ENCODE measurements at regions of chr1 and their contacts with region 1.

Region 1: GRCh38 chr1:223683586-223684487 is 18.3 kb upstream of the CAPN8 start:
- DNase-seq: peak; percentile 55
- H3K4me3 ChIP-seq: no peak overlapping the region
- H3K27ac ChIP-seq: no peak overlapping the region
- H3K4me1 ChIP-seq: no peaks in the 10 kb centered on the region
- H3K27me3 ChIP-seq: peaks cover 9 to 24% of the 10 kb centered on the region in 2 experiments
- CTCF ChIP-seq: peak; percentile 54 to 68
- POLR2A ChIP-seq: no peak

Region 2: GRCh38 chr1:223455470-223455869 is 228.4 kb before region 1 on chr1:
- CTCF ChIA-PET with region 1: no interaction called
- POLR2A ChIA-PET with region 1: no interaction called
- dilution Hi-C with region 1: no loop called
- intact Hi-C with region 1: no loop called
- DNase-seq: no peak
- H3K4me3 ChIP-seq: no peak overlapping the region
- H3K27ac ChIP-seq: no peak overlapping the region
- H3K4me1 ChIP-seq: no peaks in the 10 kb centered on the region
- H3K27me3 ChIP-seq: no peaks in the 10 kb centered on the region
- CTCF ChIP-seq: no peak
- POLR2A ChIP-seq: no peak

Region 3: DNA sequence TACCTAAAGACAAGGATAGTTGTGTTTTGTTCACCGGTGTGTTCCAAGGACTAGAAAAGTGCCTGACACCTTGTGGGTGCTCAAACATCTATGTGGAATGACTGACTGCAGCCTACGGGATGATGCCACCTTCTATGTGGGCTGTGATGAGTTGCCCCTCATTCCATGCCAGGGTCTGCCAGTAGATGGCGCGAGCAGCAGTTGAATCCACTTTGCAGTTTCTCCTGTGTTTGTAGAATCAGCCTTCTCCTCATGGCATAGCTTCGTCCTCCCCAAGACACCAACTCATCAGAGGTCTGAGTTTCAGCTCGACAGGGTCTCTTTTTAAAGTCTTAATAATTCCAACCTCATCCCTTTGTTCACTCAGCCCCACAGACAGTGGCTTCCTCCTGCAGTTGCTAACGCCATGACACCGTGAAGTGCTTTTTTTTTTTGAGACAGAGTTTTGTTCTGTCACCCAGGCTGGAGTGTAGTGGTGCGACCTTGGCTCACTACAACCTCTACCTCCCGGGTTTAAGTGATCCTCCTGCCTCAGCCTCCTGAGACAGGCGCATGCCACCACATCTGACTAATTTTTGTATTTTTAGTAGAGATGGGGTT is 152.0 kb before region 1 on chr1:
- CTCF ChIA-PET with region 1: interaction called, 13 read pairs
- POLR2A ChIA-PET with region 1: no interaction called
- dilution Hi-C with region 1: no loop called
- intact Hi-C with region 1: loop called (anchors 1 kb)
- DNase-seq: peak; percentile 48
- H3K4me3 ChIP-seq: no peak overlapping the region
- H3K27ac ChIP-seq: no peak overlapping the region
- H3K4me1 ChIP-seq: no peaks in the 10 kb centered on the region
- H3K27me3 ChIP-seq: no peaks in the 10 kb centered on the region
- CTCF ChIP-seq: peak; percentile 80 to 86
- POLR2A ChIP-seq: no peak